HEK293 (cell line): ENCODE measurements at regions of chr7 and their contacts with region 1.

Region 1: DNA sequence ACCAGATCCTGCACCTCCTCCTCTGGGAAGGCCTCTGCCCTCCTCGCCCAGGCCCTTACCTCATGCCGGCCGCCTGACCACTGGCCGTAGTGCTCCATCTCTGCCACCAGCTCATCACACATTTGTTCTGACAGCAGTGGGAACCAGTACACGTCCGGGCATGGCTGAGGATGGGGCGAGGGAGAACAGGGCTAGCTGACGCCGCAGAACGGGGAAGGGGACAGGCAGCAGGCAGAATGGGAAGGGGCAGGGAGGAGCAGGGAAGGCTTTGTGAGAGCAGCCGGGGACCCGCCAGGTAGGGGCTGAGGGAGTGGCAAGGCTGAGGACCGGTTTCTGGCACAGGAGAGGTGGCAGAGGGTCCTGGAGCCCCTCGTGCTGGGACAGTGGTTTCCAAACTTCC is 8.0 kb upstream of the MOGAT3 start:
- H3K4me3 ChIP-seq: no peak overlapping the region
- H3K27ac ChIP-seq: no peak overlapping the region
- H3K4me1 ChIP-seq: no peaks in the 10 kb centered on the region
- CTCF ChIP-seq: no peak

Region 2: GRCh38 chr7:101273206-101273605 is 64.4 kb after region 1 on chr7:
- CTCF ChIA-PET with region 1: no interaction called
- POLR2A ChIA-PET with region 1: interaction called, 10 read pairs
- H3K4me3 ChIP-seq: no peak overlapping the region
- H3K27ac ChIP-seq: no peak overlapping the region
- H3K4me1 ChIP-seq: no peaks in the 10 kb centered on the region
- CTCF ChIP-seq: no peak